ENCODE measurements at regions of chr20 and their contacts with region 1.

Region 1: GRCh38 chr20:5569021-5569420 is 181.2 kb upstream of the SHLD1 start:
- DNase-seq: peak in 33 of 35 experiments; percentile 7 to 76 (median 47)
- ATAC-seq: peak; percentile 74 to 82 (median 78)
- H3K4me3 ChIP-seq: no peak overlapping the region
- H3K4me3 Mint-ChIP-seq: peak overlapping the region in 1 of 3 donors; percentile 65
- H3K27ac ChIP-seq: no peak overlapping the region
- H3K27ac Mint-ChIP-seq: peak overlapping the region; percentile 18 to 80
- H3K4me1 ChIP-seq: peaks cover 0 to 22% of the 10 kb centered on the region in 2 experiments
- H3K4me1 Mint-ChIP-seq: peaks cover 21 to 36% (median 35%) of the 10 kb centered on the region in 3 donors
- H3K27me3 ChIP-seq: no peaks in the 10 kb centered on the region
- H3K27me3 Mint-ChIP-seq: no peaks in the 10 kb centered on the region

Region 2: GRCh38 chr20:5095931-5096330 is 473.1 kb before region 1 on chr20:
- CTCF ChIA-PET with region 1: no interaction called
- POLR2A ChIA-PET with region 1: no interaction called
- DNase-seq: no peak
- ATAC-seq: no peak
- H3K4me3 ChIP-seq: no peak overlapping the region
- H3K4me3 Mint-ChIP-seq: no peak overlapping the region
- H3K27ac ChIP-seq: no peak overlapping the region
- H3K27ac Mint-ChIP-seq: peak overlapping the region in 1 of 2 donors; percentile 69
- H3K4me1 ChIP-seq: peaks cover 0 to 3% of the 10 kb centered on the region in 2 experiments
- H3K4me1 Mint-ChIP-seq: peaks cover 5 to 7% (median 7%) of the 10 kb centered on the region in 3 donors
- H3K27me3 ChIP-seq: no peaks in the 10 kb centered on the region
- H3K27me3 Mint-ChIP-seq: no peaks in the 10 kb centered on the region

Region 3: DNA sequence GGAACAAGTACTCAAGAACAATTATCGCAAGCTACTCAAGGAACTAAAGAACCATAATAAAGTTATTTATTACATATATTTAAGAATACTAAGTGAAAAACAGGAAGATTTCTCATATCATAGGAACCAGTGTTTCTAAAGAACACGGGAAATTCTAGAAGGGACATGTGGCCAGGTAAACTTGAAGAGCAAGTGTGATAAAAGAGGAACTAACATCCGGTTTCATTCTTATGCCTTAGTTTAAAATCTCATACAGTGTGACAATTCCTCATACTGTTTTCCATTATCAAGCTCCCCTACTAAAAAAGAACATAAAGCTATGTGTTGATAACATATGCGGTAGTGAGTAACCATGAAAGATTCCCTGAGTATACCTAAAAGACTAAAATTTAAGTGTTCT is 17.7 kb after region 1 on chr20:
- CTCF ChIA-PET with region 1: interaction called, 3 to 7 read pairs
- POLR2A ChIA-PET with region 1: interaction called, 3 to 12 read pairs
- DNase-seq: no peak
- ATAC-seq: peak in 2 of 4 experiments; percentile 53 to 54
- H3K4me3 ChIP-seq: no peak overlapping the region
- H3K4me3 Mint-ChIP-seq: peak overlapping the region in 1 of 3 donors; percentile 5
- H3K27ac ChIP-seq: peak overlapping the region; percentile 33
- H3K27ac Mint-ChIP-seq: peak overlapping the region in 1 of 2 donors; percentile 30
- H3K4me1 ChIP-seq: peaks cover 6 to 34% of the 10 kb centered on the region in 2 experiments
- H3K4me1 Mint-ChIP-seq: peaks cover 20 to 56% (median 45%) of the 10 kb centered on the region in 3 donors
- H3K27me3 ChIP-seq: no peaks in the 10 kb centered on the region
- H3K27me3 Mint-ChIP-seq: no peaks in the 10 kb centered on the region

Region 4: DNA sequence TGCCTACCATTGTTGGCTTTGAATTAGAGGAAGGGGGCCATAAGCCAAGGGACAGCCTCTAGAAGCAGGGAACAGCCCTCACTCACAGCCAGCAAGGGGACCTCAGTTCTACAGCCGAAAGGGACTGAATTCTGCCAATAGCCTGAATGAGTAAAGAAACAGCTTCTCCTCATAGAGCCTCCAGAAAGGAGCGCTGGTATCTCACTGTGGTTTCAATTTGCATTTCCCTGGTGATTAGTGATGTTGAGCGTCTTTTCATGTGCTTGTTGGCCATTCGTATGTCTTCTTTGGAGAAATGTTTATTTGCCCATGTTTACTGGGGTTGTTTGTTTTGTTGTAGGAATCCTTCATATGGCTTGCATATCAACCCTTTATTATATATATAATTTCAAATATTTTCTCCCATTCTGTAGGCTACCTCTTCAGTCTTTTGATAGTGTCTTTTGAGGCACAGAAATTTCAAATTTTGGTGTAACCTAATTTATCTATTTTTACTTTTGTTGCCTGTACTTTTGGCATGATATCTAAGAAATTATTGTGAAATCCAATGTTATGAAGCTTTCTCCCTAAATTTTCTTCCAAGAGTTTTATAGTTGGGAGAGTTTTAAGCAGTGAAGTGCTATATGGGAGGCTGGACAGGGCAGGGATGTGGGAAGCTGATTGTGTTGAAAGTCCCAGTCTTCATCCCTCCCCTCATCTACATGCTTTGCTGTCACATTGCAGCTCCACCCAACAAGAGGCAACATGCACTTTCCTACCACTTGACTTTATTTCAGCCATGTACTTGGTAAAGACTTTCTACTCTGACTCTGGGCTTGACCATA is 98.9 kb after region 1 on chr20:
- CTCF ChIA-PET with region 1: no interaction called
- POLR2A ChIA-PET with region 1: no interaction called
- DNase-seq: no peak
- ATAC-seq: no peak
- H3K4me3 ChIP-seq: no peak overlapping the region
- H3K4me3 Mint-ChIP-seq: no peak overlapping the region
- H3K27ac ChIP-seq: no peak overlapping the region
- H3K27ac Mint-ChIP-seq: no peak overlapping the region
- H3K4me1 ChIP-seq: no peaks in the 10 kb centered on the region
- H3K4me1 Mint-ChIP-seq: peaks cover 0 to 5% (median under 1%) of the 10 kb centered on the region in 3 donors
- H3K27me3 ChIP-seq: peaks cover 0 to 5% of the 10 kb centered on the region in 2 experiments
- H3K27me3 Mint-ChIP-seq: no peaks in the 10 kb centered on the region

Region 5: GRCh38 chr20:5788385-5788895 is 219.4 kb after region 1 on chr20:
- CTCF ChIA-PET with region 1: interaction called, 20 to 43 read pairs
- POLR2A ChIA-PET with region 1: interaction called in 1 of 2 experiments, 3 read pairs
- DNase-seq: peak; percentile 19 to 93 (median 73)
- ATAC-seq: peak; percentile 87 to 99 (median 96)
- H3K4me3 ChIP-seq: no peak overlapping the region
- H3K4me3 Mint-ChIP-seq: no peak overlapping the region
- H3K27ac ChIP-seq: no peak overlapping the region
- H3K27ac Mint-ChIP-seq: peak overlapping the region in 1 of 2 donors; percentile 2
- H3K4me1 ChIP-seq: no peaks in the 10 kb centered on the region
- H3K4me1 Mint-ChIP-seq: peaks cover 0 to 15% (median 8%) of the 10 kb centered on the region in 3 donors
- H3K27me3 ChIP-seq: no peaks in the 10 kb centered on the region
- H3K27me3 Mint-ChIP-seq: no peaks in the 10 kb centered on the region

Region 6: GRCh38 chr20:5991623-5992441 is 422.8 kb after region 1 on chr20:
- CTCF ChIA-PET with region 1: interaction called in 1 of 2 experiments, 3 read pairs
- POLR2A ChIA-PET with region 1: interaction called in 1 of 2 experiments, 11 read pairs
- DNase-seq: no peak
- ATAC-seq: no peak
- H3K4me3 ChIP-seq: no peak overlapping the region
- H3K4me3 Mint-ChIP-seq: no peak overlapping the region
- H3K27ac ChIP-seq: no peak overlapping the region
- H3K27ac Mint-ChIP-seq: peak overlapping the region in 1 of 2 donors; percentile 44
- H3K4me1 ChIP-seq: peaks cover 6% of the 10 kb centered on the region in 2 experiments
- H3K4me1 Mint-ChIP-seq: peaks cover 5 to 14% (median 14%) of the 10 kb centered on the region in 3 donors
- H3K27me3 ChIP-seq: no peaks in the 10 kb centered on the region
- H3K27me3 Mint-ChIP-seq: no peaks in the 10 kb centered on the region

Region 7: GRCh38 chr20:6575912-6576401 is 1006.9 kb after region 1 on chr20:
- CTCF ChIA-PET with region 1: no interaction called
- POLR2A ChIA-PET with region 1: no interaction called
- DNase-seq: no peak
- ATAC-seq: no peak
- H3K4me3 ChIP-seq: no peak overlapping the region
- H3K4me3 Mint-ChIP-seq: no peak overlapping the region
- H3K27ac ChIP-seq: no peak overlapping the region
- H3K27ac Mint-ChIP-seq: no peak overlapping the region
- H3K4me1 ChIP-seq: no peaks in the 10 kb centered on the region
- H3K4me1 Mint-ChIP-seq: no peaks in the 10 kb centered on the region
- H3K27me3 ChIP-seq: no peaks in the 10 kb centered on the region
- H3K27me3 Mint-ChIP-seq: no peaks in the 10 kb centered on the region